K562 (cell line): ENCODE measurements at regions of chr12 and their contacts with region 1.

Region 1: DNA sequence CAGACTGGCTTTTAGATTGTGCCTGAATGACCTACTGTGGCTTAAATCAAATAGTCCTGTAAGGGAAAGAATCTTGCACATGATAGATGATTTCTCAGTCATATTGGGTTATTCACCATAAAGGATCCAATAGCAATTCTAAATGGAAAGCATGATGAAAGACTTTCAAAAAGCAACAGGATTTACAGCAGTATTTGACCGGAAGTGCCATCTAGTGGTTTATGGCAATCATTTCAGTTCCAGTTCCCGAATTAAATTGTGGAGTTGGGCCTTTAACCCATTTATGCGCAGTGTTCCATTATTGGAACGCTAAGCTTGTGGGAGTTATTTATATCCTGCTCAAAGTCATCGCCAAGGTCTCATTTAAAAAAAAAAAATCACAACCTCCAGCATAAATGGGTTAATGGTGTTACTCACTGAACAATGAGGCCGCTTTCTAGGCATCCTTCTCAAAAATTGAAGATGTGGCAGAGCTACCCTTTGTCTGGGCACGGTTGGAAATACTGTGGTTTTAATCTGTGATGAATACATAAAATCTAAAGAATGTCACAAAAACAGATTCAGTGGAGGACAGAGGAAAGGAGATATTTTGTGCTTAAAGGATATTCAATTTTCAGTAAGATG is 60.8 kb upstream of the REP15 start:
- DNase-seq: peak in 2 of 4 experiments; percentile 18 to 21
- ATAC-seq: peak; percentile 42; the same call in 1 of the 3 replicates
- H3K4me3 ChIP-seq: no peak overlapping the region
- H3K27ac ChIP-seq: no peak overlapping the region
- H3K4me1 ChIP-seq: no peaks in the 10 kb centered on the region
- H3K27me3 ChIP-seq: peaks cover 0 to 5% of the 10 kb centered on the region in 2 experiments; a peak in 1 of 5 replicates
- CTCF ChIP-seq: peak; percentile 34 to 67 (median 42); a peak in 4 of 6 replicates
- EP300 ChIP-seq: no peak
- POLR2A ChIP-seq: no peak
- RAD21 ChIP-seq: peak; percentile 64 to 76

Region 2: DNA sequence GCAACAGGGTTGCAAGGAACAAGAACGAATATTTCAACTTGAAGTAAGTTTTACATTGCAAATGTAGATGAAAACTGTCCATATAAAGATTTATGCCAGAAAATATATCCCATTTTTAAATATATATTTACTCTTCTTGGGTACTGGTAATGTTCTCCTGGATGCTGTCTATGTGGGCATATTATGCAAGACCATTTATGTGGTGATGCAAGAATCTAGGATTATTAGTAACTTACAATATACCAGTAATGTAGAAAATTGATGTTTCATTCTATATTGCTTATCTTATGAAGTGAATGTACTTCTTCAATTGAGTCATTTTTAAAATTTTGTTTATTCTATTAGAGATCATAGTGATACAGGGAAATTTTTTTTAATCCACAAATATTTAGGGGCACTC is 672.0 kb before region 1 on chr12:
- CTCF ChIA-PET with region 1: no interaction called
- POLR2A ChIA-PET with region 1: no interaction called
- in situ Hi-C with region 1: no loop called
- intact Hi-C with region 1: no loop called
- DNase-seq: no peak
- ATAC-seq: no peak
- H3K4me3 ChIP-seq: no peak overlapping the region
- H3K27ac ChIP-seq: no peak overlapping the region
- H3K4me1 ChIP-seq: no peaks in the 10 kb centered on the region
- H3K27me3 ChIP-seq: no peaks in the 10 kb centered on the region
- CTCF ChIP-seq: no peak
- EP300 ChIP-seq: no peak
- POLR2A ChIP-seq: no peak
- RAD21 ChIP-seq: no peak

Region 3: DNA sequence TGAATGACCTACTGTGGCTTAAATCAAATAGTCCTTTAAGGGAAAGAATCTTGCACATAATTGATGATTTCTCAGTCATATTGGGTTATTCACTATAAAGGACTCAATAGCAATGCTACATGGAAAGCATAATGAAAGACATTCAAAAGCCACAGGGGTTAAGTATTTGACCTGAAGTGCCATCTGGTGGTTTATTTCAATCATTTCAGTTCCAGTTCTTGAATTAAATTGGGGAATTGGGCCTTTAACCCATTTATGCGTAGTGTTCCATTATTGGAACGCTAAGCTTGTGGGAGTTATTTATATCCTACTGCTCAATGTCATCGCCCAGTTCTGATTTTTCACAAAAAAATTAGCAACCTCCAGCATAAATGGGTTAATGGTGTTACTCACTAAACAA is 511.8 kb before region 1 on chr12:
- CTCF ChIA-PET with region 1: no interaction called
- POLR2A ChIA-PET with region 1: no interaction called
- in situ Hi-C with region 1: no loop called
- intact Hi-C with region 1: loop called (anchors 5 kb)
- DNase-seq: peak; percentile 11 to 27 (median 18)
- ATAC-seq: peak; percentile 53; the same call in 1 of the 3 replicates
- H3K4me3 ChIP-seq: no peak overlapping the region
- H3K27ac ChIP-seq: no peak overlapping the region
- H3K4me1 ChIP-seq: no peaks in the 10 kb centered on the region
- H3K27me3 ChIP-seq: peaks cover 0 to 9% of the 10 kb centered on the region in 2 experiments; a peak in 2 of 5 replicates
- CTCF ChIP-seq: peak in 2 of 3 experiments; percentile 19 to 51; a peak in 3 of 6 replicates
- EP300 ChIP-seq: no peak
- POLR2A ChIP-seq: no peak
- RAD21 ChIP-seq: peak; percentile 69 to 77